BJ (cell line): ENCODE measurements at regions of chr20 and their contacts with region 1.

Region 1: DNA sequence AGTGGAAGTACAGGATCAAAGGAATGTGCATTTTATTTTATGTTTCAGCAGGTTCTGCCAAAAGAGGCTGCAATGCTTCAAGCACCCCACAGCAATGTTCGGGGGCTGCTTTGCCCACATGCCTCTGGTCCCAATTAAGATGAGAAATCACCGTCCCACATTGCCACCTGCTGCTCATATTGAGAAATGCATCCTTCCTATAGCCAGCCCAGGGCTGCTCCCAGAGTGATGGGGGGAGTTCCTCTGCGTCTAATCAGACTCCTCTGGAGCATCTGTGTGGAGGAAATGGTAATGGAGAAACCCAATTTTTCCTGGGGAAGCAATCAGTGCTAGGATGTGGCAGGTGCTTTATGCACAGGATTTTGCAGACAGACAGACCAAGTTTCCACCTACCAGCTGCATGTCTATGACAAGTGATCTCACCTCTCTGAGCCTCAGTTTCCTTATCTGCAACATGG is 33.7 kb downstream of the PTGIS start:
- DNase-seq: no peak
- H3K4me3 ChIP-seq: no peak overlapping the region
- H3K27me3 ChIP-seq: no peaks in the 10 kb centered on the region
- CTCF ChIP-seq: peak; percentile 79

Region 2: GRCh38 chr20:49338061-49338460 is 196.2 kb before region 1 on chr20:
- CTCF ChIA-PET with region 1: interaction called, 70 read pairs
- POLR2A ChIA-PET with region 1: no interaction called
- DNase-seq: no peak
- H3K4me3 ChIP-seq: no peak overlapping the region
- H3K27me3 ChIP-seq: peaks cover under 1% of the 10 kb centered on the region; the same call in 1 of the 2 replicates
- CTCF ChIP-seq: no peak

Region 3: GRCh38 chr20:49433333-49433732 is 101.0 kb before region 1 on chr20:
- CTCF ChIA-PET with region 1: no interaction called
- POLR2A ChIA-PET with region 1: no interaction called
- DNase-seq: no peak
- H3K4me3 ChIP-seq: no peak overlapping the region
- H3K27me3 ChIP-seq: peaks cover 18% of the 10 kb centered on the region
- CTCF ChIP-seq: no peak

Region 4: DNA sequence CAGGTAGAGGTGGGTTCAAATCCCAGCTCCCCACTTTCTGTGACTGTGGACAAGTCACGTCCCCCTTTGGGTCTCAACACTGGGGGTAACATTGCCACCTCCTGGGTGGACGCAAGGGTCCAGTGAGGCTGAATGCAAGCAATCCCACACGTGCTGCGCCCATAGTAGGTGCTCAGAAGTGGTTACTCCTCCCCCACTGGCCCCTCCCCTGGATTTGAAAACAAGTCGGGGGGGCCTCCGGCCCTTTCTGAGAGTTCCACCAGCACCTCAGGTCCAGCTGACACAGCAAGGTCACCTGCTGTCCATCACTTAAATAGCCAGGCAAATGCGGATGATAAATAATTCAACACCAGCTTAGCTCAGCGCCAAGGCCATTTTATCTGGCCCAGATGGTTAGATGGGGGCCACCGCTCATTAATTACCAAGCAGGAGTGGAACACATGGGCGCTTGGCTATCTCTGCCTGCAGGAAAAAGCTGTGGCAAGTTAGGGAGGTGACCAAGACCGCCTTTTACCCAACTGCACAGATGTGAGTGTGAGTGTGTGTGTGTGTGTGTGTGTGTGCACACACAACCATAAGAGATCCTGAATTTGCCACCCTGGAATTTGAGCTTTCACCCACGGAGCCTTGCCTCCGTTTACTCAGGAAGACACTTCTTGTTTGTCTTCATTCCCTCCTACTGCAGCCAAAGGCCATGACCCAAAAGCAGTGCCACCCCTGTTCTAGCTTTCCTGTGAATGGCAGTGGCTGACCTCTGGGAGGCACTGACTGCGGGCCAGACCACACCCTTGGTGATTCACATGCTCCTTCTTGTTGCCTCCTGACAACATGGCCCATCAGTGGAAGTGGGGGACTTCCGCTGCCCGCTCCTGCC is 17.1 kb before region 1 on chr20:
- CTCF ChIA-PET with region 1: interaction called, 13 read pairs
- POLR2A ChIA-PET with region 1: no interaction called
- DNase-seq: no peak
- H3K4me3 ChIP-seq: no peak overlapping the region
- H3K27me3 ChIP-seq: no peaks in the 10 kb centered on the region; the same call in 1 of the 2 replicates
- CTCF ChIP-seq: no peak